MCF 10A (cell line): ENCODE measurements at regions of chr1 and their contacts with region 1.

Region 1: DNA sequence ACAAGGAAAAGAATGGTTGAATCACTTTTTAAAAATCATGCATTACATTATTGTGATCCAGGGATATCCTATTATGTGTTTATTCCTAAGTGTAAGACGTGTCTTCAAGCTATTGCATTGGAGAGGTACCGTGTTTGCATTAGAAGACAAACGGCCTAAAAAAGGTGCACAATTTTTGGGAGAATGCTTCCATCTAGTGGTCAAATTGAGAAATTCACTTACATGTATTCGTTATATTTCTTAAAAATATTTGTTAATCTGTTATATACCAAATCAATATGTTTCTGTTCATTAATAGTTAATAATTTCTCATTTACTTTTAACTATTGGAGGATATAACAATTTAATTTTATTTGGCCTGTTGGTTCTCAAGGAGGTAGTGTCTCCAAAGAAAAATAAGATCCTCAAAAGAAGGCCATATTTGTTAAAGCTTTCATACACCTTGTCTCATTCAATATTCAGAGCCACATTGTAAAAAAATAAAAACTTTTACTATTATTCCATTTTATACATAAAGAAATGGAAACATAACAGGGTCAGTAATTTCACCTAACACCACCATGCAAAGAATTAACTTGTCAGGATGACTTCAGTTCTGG is 40.5 kb upstream of the KCTD3 start:
- DNase-seq: peak; percentile 80
- H3K4me3 Mint-ChIP-seq: no peak overlapping the region
- H3K27ac Mint-ChIP-seq: no peak overlapping the region
- H3K4me1 Mint-ChIP-seq: peaks cover 12% of the 10 kb centered on the region
- H3K27me3 Mint-ChIP-seq: no peaks in the 10 kb centered on the region
- CTCF ChIP-seq: peak; percentile 86

Region 2: DNA sequence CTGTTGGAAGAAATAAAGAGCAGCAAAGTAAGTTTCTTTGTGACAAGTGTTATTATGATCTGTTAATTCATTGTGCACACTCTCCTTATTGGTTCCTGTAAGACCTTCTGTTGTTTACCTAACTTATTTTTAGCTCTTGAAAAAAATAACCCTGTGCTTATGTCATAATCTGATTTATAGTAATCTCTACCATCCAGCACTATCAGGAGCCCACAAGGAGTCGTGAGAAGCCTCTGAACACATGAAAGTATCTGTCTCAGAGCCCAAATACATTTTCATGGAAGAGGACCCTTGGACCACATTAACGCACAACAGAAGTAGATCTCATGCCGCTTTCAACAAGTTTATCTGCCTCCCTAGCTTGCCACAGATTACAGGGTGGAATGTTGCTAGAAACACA is 877.9 kb before region 1 on chr1:
- CTCF ChIA-PET with region 1: interaction called, 335 read pairs
- POLR2A ChIA-PET with region 1: interaction called, 5 read pairs
- intact Hi-C with region 1: no loop called
- DNase-seq: no peak
- H3K4me3 Mint-ChIP-seq: no peak overlapping the region
- H3K27ac Mint-ChIP-seq: no peak overlapping the region
- H3K4me1 Mint-ChIP-seq: no peaks in the 10 kb centered on the region
- H3K27me3 Mint-ChIP-seq: no peaks in the 10 kb centered on the region
- CTCF ChIP-seq: no peak

Region 3: DNA sequence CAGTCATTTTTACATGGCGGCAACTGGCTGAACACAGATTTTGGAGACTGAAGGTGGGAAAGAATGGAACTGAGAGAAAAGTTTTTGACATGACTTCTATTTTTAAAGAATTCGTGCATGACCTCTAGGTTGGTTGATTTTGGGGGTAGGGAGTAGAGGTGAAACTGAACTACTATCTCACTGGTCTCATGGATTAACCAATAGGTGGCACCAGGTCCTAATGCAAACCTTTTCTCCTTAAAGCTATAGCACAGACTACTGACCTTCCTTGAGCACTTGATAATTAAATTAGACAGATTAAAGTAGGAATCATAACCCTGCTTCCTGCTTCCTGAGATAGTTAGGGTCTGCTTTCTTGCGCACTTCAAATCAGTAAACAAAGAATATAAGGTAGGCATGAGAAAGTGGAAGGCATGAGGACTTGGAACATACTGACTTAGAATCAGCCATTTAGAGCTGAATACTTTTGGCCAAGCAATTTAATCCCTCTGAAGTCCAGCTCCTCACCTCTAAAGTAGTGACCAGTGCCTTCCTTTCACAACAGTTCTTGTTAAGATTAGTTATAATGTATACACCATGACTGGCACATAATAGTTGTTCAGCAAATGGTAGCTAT is 717.7 kb before region 1 on chr1:
- CTCF ChIA-PET with region 1: interaction called, 65 read pairs
- POLR2A ChIA-PET with region 1: interaction called, 4 read pairs
- intact Hi-C with region 1: loop called (anchors 1 kb)
- DNase-seq: peak; percentile 84
- H3K4me3 Mint-ChIP-seq: no peak overlapping the region
- H3K27ac Mint-ChIP-seq: no peak overlapping the region
- H3K4me1 Mint-ChIP-seq: no peaks in the 10 kb centered on the region
- H3K27me3 Mint-ChIP-seq: no peaks in the 10 kb centered on the region
- CTCF ChIP-seq: peak; percentile 93

Region 4: GRCh38 chr1:215507119-215507518 is 19.5 kb before region 1 on chr1:
- CTCF ChIA-PET with region 1: interaction called, 15 read pairs
- POLR2A ChIA-PET with region 1: no interaction called
- intact Hi-C with region 1: no loop called
- DNase-seq: no peak
- H3K4me3 Mint-ChIP-seq: no peak overlapping the region
- H3K27ac Mint-ChIP-seq: no peak overlapping the region
- H3K4me1 Mint-ChIP-seq: peaks cover 4% of the 10 kb centered on the region
- H3K27me3 Mint-ChIP-seq: no peaks in the 10 kb centered on the region
- CTCF ChIP-seq: no peak

Region 5: GRCh38 chr1:215543191-215543606 is 16.5 kb after region 1 on chr1:
- CTCF ChIA-PET with region 1: interaction called, 38 read pairs
- POLR2A ChIA-PET with region 1: interaction called, 9 read pairs
- intact Hi-C with region 1: no loop called
- DNase-seq: peak; percentile 79
- H3K4me3 Mint-ChIP-seq: no peak overlapping the region
- H3K27ac Mint-ChIP-seq: peak overlapping the region; percentile 24
- H3K4me1 Mint-ChIP-seq: peaks cover 35% of the 10 kb centered on the region
- H3K27me3 Mint-ChIP-seq: no peaks in the 10 kb centered on the region
- CTCF ChIP-seq: no peak

Region 6: GRCh38 chr1:215606564-215607168 is 80.0 kb after region 1 on chr1:
- CTCF ChIA-PET with region 1: interaction called, 15 read pairs
- POLR2A ChIA-PET with region 1: no interaction called
- intact Hi-C with region 1: loop called (anchors 1 kb)
- DNase-seq: peak; percentile 50
- H3K4me3 Mint-ChIP-seq: no peak overlapping the region
- H3K27ac Mint-ChIP-seq: peak overlapping the region; percentile 32
- H3K4me1 Mint-ChIP-seq: peaks cover 21% of the 10 kb centered on the region
- H3K27me3 Mint-ChIP-seq: no peaks in the 10 kb centered on the region
- CTCF ChIP-seq: peak; percentile 68